ENCODE measurements at regions of chr18 and their contacts with region 1.

Region 1: DNA sequence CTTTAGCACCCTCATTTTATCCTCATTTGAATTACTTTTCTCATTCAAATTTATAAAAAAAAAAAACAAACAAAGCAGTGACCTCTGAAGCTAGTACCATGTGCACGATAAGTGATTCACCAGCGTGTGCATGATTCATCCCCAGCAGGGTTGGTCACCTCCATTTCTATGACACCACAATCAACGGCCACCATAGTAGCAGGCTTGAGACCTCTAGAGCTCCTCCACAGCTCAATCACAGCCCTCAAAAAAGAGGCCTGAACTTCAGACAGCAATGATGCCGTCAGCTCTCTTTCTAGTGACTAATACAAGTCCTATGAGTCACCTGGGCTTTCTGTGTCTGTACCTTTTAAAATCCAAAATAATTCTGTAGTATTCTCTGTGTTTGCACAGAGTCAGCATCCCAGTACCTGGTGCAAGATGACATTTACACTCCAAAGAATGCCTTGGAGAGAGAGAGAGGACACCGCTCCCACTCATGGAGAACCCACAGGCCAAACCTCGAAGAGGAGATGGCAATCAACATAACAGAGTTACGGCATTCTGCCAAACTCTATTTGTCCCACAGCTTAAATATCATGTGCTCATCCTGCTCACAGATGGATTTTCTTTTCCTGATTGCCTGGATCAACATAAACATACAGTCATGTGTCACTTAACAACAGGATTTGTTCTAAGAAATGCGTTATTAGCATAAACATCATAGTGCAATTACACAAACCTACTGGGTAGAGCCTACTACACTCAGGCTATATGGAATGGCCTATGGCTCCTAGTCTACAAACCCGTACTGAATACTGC is 58.7 kb downstream of the L3MBTL4 start:
- DNase-seq: no peak
- ATAC-seq: no peak
- H3K4me3 Mint-ChIP-seq: no peak overlapping the region
- H3K27ac Mint-ChIP-seq: no peak overlapping the region
- H3K4me1 Mint-ChIP-seq: peaks cover 28% of the 10 kb centered on the region
- H3K27me3 Mint-ChIP-seq: peaks cover 2% of the 10 kb centered on the region; the same call in 1 of the 2 replicates
- CTCF ChIP-seq: no peak

Region 2: DNA sequence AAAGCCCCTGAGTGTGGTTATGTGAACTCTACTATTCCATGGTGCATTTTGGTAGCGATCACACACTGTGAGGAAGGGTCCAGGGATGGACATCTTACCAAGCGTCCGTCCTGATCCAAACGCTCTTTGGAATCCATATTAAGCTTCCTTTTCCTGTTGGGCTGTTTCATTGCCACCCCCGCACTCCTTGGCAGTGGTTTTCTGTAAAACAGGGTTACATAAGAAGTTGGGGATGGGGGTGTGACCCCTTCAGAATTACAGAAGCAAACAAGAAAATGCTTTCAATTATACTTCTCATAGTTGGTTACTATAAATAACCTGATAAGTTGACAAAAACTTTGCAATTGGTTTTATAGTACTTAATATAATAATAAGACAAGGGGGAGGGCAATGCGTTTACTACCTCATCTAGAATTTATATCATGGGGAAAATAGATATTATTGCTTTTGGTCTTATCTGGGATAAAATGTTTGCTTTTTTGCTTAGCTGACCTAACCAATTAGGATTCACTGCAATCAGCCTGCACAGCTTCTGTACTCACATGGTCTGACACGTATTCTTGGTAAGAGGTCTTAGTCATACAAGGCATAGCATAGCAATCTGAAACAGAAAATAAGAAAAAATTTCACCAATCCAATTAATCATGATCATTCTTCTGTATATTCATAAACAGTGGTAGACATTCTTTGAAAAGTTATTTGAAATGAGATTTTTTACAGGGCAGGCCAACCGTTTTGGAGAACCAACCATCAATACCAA is 44.4 kb before region 1 on chr18:
- CTCF ChIA-PET with region 1: no interaction called
- POLR2A ChIA-PET with region 1: no interaction called
- DNase-seq: no peak
- ATAC-seq: no peak
- H3K4me3 Mint-ChIP-seq: no peak overlapping the region
- H3K27ac Mint-ChIP-seq: no peak overlapping the region
- H3K4me1 Mint-ChIP-seq: no peaks in the 10 kb centered on the region
- H3K27me3 Mint-ChIP-seq: no peaks in the 10 kb centered on the region
- CTCF ChIP-seq: no peak

Region 3: DNA sequence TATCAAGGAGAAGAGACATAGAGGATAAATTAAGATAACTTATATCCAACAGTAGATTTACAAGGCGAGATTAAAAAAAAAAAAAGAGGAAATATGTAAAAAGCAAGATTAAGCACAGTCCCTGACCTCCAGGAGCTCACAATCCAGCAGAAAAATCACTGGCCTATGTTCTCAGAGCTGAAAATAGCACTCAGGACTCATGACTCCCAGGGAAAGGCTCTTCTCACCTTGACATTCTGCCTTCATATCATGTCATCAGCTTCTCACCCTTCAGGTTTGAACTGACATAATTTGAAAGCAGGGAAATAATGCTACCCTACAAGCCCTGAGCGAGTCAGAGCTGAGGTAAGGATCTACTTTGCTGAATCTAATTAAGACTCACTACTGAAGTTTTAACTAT is 24.1 kb before region 1 on chr18:
- CTCF ChIA-PET with region 1: no interaction called
- POLR2A ChIA-PET with region 1: interaction called, 10 read pairs
- DNase-seq: no peak
- ATAC-seq: no peak
- H3K4me3 Mint-ChIP-seq: no peak overlapping the region
- H3K27ac Mint-ChIP-seq: no peak overlapping the region
- H3K4me1 Mint-ChIP-seq: no peaks in the 10 kb centered on the region
- H3K27me3 Mint-ChIP-seq: no peaks in the 10 kb centered on the region
- CTCF ChIP-seq: no peak